ENCODE measurements at regions of chr14 and their contacts with region 1.

Region 1: GRCh38 chr14:72516936-72517700 is 376.8 kb downstream of the DPF3 start:
- DNase-seq: peak; percentile 58 to 78 (median 64)
- H3K4me3 ChIP-seq: no peak overlapping the region
- H3K4me3 Mint-ChIP-seq: peak overlapping the region in 3 of 7 donors; percentile 45 to 54 (median 47)
- H3K27ac ChIP-seq: no peak overlapping the region
- H3K27ac Mint-ChIP-seq: peak overlapping the region in 1 of 8 donors; percentile 6
- H3K4me1 ChIP-seq: peaks cover 34% of the 10 kb centered on the region
- H3K4me1 Mint-ChIP-seq: peaks cover 53 to 56% (median 55%) of the 10 kb centered on the region in 3 donors
- H3K27me3 ChIP-seq: no peaks in the 10 kb centered on the region
- H3K27me3 Mint-ChIP-seq: peaks cover 0 to 3% of the 10 kb centered on the region in 2 donors

Region 2: DNA sequence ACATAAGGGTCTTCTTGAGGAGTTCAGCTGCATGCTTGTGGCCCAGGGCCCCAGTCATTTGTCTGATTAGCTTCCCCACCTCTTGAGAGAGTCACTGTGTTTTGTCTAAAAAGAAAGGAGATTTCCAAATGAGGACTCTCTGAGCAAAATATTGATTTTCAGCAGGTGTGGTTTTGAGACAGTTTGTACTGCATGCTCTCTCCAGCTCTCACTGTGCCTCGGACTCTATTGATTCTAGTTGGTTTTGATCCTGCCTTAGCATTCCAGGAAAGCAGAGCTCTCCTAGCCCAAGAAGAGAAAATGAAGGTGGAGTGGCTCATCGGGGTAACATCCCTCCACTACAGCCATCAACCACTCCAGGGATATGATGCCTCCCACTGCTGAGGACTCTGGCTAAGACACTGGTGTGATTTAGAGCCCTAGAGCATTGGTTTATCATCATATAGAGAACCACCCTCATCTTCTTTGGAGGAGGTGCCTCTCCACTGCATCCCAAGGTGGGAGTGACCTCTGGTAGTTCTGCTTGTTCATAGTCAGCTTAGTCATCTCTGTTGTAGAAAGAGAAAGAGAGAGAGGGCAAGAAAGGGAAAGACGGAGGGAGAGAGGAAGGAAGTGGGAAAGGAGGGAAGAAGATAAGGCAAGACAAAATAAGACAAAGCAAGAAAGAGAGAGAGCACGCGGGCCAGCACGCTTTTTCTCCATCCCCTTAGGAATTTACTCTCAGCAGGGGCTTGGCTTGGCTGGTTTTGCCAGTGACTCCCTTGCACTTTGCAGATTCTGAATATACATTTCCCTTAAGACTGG is 11.1 kb after region 1 on chr14:
- CTCF ChIA-PET with region 1: interaction called, 22 read pairs
- POLR2A ChIA-PET with region 1: no interaction called
- DNase-seq: no peak
- H3K4me3 ChIP-seq: no peak overlapping the region
- H3K4me3 Mint-ChIP-seq: no peak overlapping the region
- H3K27ac ChIP-seq: no peak overlapping the region
- H3K27ac Mint-ChIP-seq: no peak overlapping the region
- H3K4me1 ChIP-seq: peaks cover 35% of the 10 kb centered on the region
- H3K4me1 Mint-ChIP-seq: peaks cover 36 to 45% (median 43%) of the 10 kb centered on the region in 3 donors
- H3K27me3 ChIP-seq: no peaks in the 10 kb centered on the region
- H3K27me3 Mint-ChIP-seq: no peaks in the 10 kb centered on the region

Region 3: DNA sequence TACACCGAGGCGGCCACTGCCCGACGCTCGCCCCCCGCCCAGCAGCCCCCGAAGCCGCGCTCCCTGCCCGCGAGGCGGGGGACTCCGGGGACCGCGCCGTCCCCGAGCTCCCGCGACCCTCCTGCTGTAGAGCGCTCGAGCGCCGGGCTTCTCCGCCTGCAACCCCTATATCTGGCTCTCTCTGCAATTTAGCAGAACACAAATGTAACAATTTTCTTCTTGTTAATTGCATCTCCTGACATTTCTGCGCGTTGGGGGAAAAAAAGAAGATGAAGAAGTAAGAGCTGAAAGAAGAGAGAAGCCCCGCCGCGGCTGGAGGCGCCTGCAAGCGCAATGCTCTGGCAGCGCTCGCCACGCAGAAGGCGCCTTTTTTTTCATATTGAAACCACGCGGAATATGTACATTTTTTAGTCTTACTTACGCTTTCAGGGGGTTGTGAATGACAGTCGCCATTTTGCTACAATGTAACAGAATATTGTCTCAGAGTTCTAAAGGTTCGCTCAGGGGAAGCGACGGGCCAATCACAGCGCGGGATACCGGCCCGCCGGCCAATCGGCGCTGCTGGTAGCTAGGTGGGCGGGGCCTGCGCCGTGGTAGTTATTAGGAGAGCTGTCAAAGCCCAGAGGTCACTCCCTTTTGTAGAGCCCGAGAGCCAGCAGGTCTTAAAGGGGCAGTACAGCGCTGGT is 376.7 kb after region 1 on chr14 and contains the start of gene DPF3:
- CTCF ChIA-PET with region 1: interaction called, 11 read pairs
- POLR2A ChIA-PET with region 1: interaction called, 6 read pairs
- DNase-seq: peak; percentile 88 to 92 (median 89)
- H3K4me3 ChIP-seq: peak within 1 kb of the TSS; percentile 85
- H3K4me3 Mint-ChIP-seq: peak within 1 kb of the TSS; percentile 94 to 99 (median 97)
- H3K27ac ChIP-seq: peak within 1 kb of the TSS; percentile 16
- H3K27ac Mint-ChIP-seq: peak within 1 kb of the TSS; percentile 23 to 90 (median 78)
- H3K4me1 ChIP-seq: peaks cover 26% of the 10 kb centered on the region
- H3K4me1 Mint-ChIP-seq: peaks cover 28 to 31% (median 29%) of the 10 kb centered on the region in 3 donors
- H3K27me3 ChIP-seq: peaks cover 34% of the 10 kb centered on the region
- H3K27me3 Mint-ChIP-seq: peaks cover 35 to 64% of the 10 kb centered on the region in 2 donors
- total RNA-seq, gene DPF3: 0.50 to 0.62 TPM

Region 4: GRCh38 chr14:72904840-72905561 is 387.9 kb after region 1 on chr14:
- CTCF ChIA-PET with region 1: interaction called, 138 read pairs
- POLR2A ChIA-PET with region 1: no interaction called
- DNase-seq: peak; percentile 44 to 74 (median 54)
- H3K4me3 ChIP-seq: no peak overlapping the region
- H3K4me3 Mint-ChIP-seq: no peak overlapping the region
- H3K27ac ChIP-seq: no peak overlapping the region
- H3K27ac Mint-ChIP-seq: peak overlapping the region in 1 of 8 donors; percentile 49
- H3K4me1 ChIP-seq: no peaks in the 10 kb centered on the region
- H3K4me1 Mint-ChIP-seq: peaks cover 0 to 4% (median 0%) of the 10 kb centered on the region in 3 donors
- H3K27me3 ChIP-seq: no peaks in the 10 kb centered on the region
- H3K27me3 Mint-ChIP-seq: peaks cover 5 to 28% of the 10 kb centered on the region in 2 donors

Measured in CD8-positive, alpha-beta memory T cell (primary cell).